PC-3 (cell line): ENCODE measurements at regions of chr1 and their contacts with region 1.

Region 1: GRCh38 chr1:119948342-119949214 is 52.3 kb upstream of the ADAM30 start:
- DNase-seq: peak; percentile 82
- ATAC-seq: peak; percentile 82
- H3K4me3 ChIP-seq: no peak overlapping the region
- H3K27ac ChIP-seq: no peak overlapping the region
- H3K4me1 ChIP-seq: peaks cover 21% of the 10 kb centered on the region
- H3K27me3 ChIP-seq: no peaks in the 10 kb centered on the region
- CTCF ChIP-seq: peak; percentile 93

Region 2: DNA sequence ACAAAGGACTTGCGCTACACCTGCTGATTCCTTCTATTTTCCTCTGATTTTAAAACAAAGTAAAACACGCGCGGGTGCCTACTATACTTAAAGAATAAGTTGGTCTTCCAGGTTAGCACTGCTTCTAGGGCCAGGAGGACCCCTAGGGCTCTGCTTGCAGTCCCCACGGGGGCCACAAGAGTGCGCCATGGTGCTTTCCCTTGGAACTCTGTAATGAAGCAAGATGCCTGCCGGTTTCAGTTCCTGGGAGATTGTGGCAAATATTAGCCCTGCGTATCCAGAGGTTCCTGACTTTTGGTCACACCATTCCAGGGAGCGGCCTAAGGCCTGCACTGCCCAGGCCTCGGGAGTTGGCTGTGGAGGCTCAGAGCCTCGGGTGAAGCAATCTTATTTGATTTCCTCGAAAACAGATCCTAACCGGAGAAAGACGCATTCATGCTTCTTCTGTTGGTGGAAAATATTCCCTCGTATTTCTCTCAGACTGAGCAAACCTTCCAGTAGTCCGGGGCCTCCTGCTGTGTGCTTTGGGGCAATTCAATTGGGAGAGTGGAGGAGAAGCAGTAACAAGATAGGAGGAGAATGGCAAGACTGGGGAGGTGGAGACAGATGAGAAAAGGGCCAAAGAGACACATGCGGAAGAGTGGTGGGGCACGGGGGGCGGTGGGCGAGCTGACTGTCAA is 77.5 kb before region 1 on chr1:
- CTCF ChIA-PET with region 1: interaction called, 5 read pairs
- POLR2A ChIA-PET with region 1: no interaction called
- intact Hi-C with region 1: loop called (anchors 5 kb)
- DNase-seq: peak; percentile 92
- ATAC-seq: peak; percentile 63
- H3K4me3 ChIP-seq: no peak overlapping the region
- H3K27ac ChIP-seq: no peak overlapping the region
- H3K4me1 ChIP-seq: peaks cover 17% of the 10 kb centered on the region
- H3K27me3 ChIP-seq: no peaks in the 10 kb centered on the region
- CTCF ChIP-seq: peak; percentile 97

Region 3: DNA sequence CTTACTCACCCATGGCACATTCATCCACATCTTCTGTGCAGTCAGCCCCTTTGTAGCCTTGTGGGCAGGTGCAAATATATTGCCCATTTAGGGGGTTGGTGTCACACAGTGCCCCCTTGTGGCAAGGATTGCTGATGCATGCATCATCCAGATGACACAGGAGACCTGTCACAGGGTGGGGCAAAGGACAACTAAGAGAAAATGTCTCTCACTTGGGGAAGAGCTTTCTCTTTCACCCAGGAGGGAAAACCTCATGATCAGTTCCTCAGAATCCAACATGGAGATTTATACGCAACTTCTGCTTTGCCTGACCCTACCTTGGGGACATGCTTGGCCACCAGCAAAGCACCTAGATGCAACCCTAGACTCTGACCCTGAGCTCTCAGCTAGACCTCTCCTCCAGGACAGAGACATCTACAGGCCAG is 19.5 kb after region 1 on chr1:
- CTCF ChIA-PET with region 1: no interaction called
- POLR2A ChIA-PET with region 1: no interaction called
- intact Hi-C with region 1: no loop called
- DNase-seq: peak; percentile 85
- ATAC-seq: peak; percentile 78
- H3K4me3 ChIP-seq: no peak overlapping the region
- H3K27ac ChIP-seq: no peak overlapping the region
- H3K4me1 ChIP-seq: peaks cover 27% of the 10 kb centered on the region
- H3K27me3 ChIP-seq: no peaks in the 10 kb centered on the region
- CTCF ChIP-seq: peak; percentile 92